ENCODE measurements at regions of chr19 and their contacts with region 1.

Region 1: GRCh38 chr19:18349524-18350128 is 9.2 kb downstream of the PGPEP1 start:
- DNase-seq: no peak
- H3K4me3 ChIP-seq: no peak overlapping the region
- H3K27ac ChIP-seq: no peak overlapping the region
- H3K4me1 ChIP-seq: peaks cover 0 to 20% (median 0%) of the 10 kb centered on the region in 3 donors
- H3K27me3 ChIP-seq: no peaks in the 10 kb centered on the region
- CTCF ChIP-seq: peak; percentile 51 to 86 (median 78)
- POLR2A ChIP-seq: no peak

Region 2: DNA sequence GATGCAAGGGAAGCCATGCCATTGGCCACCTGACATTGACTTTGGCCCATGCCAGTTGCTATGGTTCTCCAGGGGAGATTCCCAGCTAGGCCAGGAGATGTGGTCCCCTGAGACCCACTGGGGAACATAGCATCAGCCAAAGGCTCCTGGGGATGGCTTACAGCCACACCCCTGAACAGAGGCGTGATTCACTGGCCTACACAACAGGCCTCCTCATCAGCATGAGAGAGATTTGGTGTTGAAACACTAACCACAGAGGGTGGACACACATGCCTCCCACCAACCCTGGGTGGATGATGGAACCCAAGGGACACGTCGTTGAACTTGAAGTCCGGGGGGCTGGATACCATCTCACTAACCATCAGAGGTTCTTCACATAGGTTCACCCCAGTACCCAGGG is 89.7 kb before region 1 on chr19:
- intact Hi-C with region 1: no loop called
- DNase-seq: no peak
- H3K4me3 ChIP-seq: no peak overlapping the region
- H3K27ac ChIP-seq: no peak overlapping the region
- H3K4me1 ChIP-seq: peaks cover under 1 to 10% (median 5%) of the 10 kb centered on the region in 3 donors
- H3K27me3 ChIP-seq: peaks cover 0 to 10% (median 0%) of the 10 kb centered on the region in 4 donors
- CTCF ChIP-seq: no peak
- POLR2A ChIP-seq: no peak

Region 3: GRCh38 chr19:18414504-18415177 is 65.0 kb after region 1 on chr19:
- intact Hi-C with region 1: loop called (anchors 5 kb)
- DNase-seq: no peak
- H3K4me3 ChIP-seq: peak overlapping the region in 3 of 4 donors; percentile 21 to 58 (median 30)
- H3K27ac ChIP-seq: peak overlapping the region; percentile 67 to 94 (median 92)
- H3K4me1 ChIP-seq: peaks cover 46 to 63% (median 49%) of the 10 kb centered on the region in 3 donors
- H3K27me3 ChIP-seq: peaks cover 0 to 31% (median 0%) of the 10 kb centered on the region in 4 donors
- CTCF ChIP-seq: no peak
- POLR2A ChIP-seq: no peak